Kidney (tissue), 22 donors: ENCODE measurements at regions of chr2 and their contacts with region 1.

Region 1: DNA sequence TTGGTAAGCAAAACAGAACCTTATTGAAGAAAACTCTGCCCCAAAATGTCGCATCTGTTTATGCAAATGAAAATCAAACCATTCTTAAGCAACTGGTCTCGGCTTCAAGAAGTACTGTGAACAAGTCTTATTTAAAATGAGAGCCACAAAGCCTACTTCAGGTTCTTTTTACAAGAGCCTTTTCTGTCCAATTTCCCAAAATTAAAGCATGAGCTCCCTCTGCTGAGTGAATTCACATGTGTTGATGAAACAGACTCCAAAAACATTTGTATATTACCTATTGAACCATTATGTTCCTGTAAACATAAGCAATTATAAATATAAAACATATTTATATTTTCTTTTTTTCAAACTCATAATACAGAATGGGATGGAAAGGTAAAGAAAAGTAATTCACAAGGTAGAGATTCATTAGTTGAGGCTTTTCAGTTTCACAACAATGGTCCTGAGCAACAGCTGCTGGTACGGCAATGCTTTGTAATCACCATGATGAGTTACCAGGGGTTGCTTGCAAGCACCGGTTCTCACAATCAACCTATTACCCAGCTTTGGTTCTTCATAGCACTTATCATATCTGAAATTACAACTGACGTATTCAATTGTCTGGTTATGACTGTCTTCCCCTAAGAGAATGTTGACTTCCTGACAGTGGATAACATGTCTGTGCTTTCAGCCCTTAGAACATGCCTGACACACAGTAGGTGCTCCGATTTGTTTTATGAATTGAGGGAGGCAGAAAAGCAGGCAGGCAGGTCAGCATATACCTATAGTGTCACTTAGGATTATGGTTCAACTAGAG is 108.4 kb upstream of the BZW1 start:
- DNase-seq: peak in 3 of 5 donors; percentile 26 to 87 (median 78)
- H3K4me3 ChIP-seq: no peak overlapping the region
- H3K27ac ChIP-seq: no peak overlapping the region
- H3K4me1 ChIP-seq: no peaks in the 10 kb centered on the region
- H3K27me3 ChIP-seq: no peaks in the 10 kb centered on the region
- CTCF ChIP-seq: peak; percentile 58

Region 2: DNA sequence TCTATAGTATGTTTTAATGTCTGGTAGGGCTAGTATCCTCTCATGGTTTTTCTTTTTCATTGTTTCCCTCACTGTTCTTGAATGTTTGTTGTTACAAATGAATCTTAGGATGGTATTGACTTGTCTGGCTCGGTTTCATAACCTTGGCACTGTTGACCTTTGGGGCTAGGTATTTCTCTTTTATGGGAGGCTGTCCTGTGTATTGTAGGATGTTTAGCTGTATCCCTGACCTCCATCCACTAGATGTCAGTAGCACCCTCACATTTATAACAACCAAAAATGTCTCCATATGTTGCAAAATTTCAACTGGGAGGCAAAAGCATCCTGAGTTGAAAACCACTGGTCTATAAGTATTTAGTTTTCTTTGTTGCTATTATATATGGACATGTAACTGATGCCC is 124.5 kb before region 1 on chr2:
- intact Hi-C with region 1: loop called (anchors 10 kb)
- DNase-seq: no peak
- H3K4me3 ChIP-seq: no peak overlapping the region
- H3K27ac ChIP-seq: no peak overlapping the region
- H3K4me1 ChIP-seq: no peaks in the 10 kb centered on the region
- H3K27me3 ChIP-seq: no peaks in the 10 kb centered on the region
- CTCF ChIP-seq: peak; percentile 62